ENCODE measurements at regions of chr5 and their contacts with region 1.

Region 1: DNA sequence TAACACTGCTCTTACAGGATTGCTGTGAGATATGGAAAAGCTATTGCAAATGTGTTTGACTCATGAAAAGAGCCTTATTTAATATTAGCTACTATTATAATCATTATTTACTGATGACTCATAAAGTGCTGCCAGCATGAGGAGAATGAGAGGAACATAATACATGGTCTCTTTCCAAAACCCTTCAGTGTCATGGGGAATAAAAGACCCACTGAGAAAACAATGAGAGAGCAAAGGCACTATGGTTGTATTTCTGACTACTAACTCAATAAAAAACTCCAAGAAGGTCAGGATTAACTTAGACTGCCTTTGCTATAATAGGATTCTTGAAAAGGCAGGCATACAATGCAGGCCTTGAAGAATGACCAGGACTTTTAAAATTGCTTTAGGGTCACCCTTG is 633.5 kb downstream of the DTWD2 start:
- DNase-seq: no peak
- ATAC-seq: no peak
- H3K4me3 ChIP-seq: no peak overlapping the region
- H3K27ac ChIP-seq: no peak overlapping the region
- H3K4me1 ChIP-seq: no peaks in the 10 kb centered on the region
- H3K27me3 ChIP-seq: no peaks in the 10 kb centered on the region
- CTCF ChIP-seq: no peak

Region 2: GRCh38 chr5:117788594-117788993 is 566.2 kb before region 1 on chr5:
- intact Hi-C with region 1: loop called in 1 of 3 experiments (anchors 10 kb)
- DNase-seq: no peak
- ATAC-seq: no peak
- H3K4me3 ChIP-seq: no peak overlapping the region
- H3K27ac ChIP-seq: no peak overlapping the region
- H3K4me1 ChIP-seq: no peaks in the 10 kb centered on the region
- H3K27me3 ChIP-seq: no peaks in the 10 kb centered on the region
- CTCF ChIP-seq: no peak

Measured in pancreas (tissue), 10 donors.